ENCODE measurements at regions of chr3 and their contacts with region 1.

Region 1: DNA sequence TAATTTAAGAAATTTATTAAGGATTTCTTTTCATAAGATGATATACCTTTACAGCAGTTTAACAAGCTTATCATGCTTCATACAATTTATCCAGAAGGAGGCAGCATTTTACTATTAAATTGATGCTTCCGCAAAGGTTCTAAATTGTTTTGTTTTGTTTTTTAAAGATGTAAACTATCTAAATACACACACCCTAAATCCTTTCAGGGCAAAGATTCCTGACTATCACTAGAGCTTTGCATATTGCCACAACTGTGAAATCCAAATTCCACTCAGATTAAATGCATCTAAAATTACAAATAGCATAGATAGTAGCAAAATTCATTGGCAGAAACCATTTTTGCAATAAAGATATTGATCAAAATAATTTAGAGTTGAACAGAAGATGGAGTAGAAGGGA is 44.5 kb upstream of the CCNL1 start:
- DNase-seq: no peak
- ATAC-seq: no peak

Region 2: GRCh38 chr3:157493627-157494550 is 289.5 kb after region 1 on chr3:
- intact Hi-C with region 1: loop called (anchors 2 kb)
- DNase-seq: no peak
- ATAC-seq: peak; percentile 57